GM23248 (cell line): ENCODE measurements at regions of chr3 and their contacts with region 1.

Region 1: DNA sequence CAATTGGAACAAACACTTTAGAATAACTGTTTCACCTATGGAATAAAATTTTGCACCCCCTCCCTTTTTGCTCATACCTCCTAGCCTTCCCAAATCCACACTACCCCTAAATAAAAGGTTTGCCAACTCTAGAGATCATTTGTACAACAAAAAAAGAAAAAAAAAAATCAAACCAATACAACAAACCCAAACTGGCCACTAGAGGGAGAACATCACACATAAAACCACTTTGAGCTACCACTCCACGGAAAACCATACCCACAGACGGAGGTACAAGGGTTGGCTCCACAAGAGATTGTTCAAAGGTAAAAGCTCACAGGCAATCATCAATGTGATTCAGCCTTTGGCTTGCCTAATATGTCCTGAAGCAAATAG is 47.6 kb downstream of the SETMAR start:
- DNase-seq: peak; percentile 79
- H3K4me3 ChIP-seq: peak overlapping the region; percentile 51
- H3K27ac ChIP-seq: peak overlapping the region; percentile 56
- H3K4me1 ChIP-seq: peaks cover 15% of the 10 kb centered on the region
- H3K27me3 ChIP-seq: no peaks in the 10 kb centered on the region

Region 2: DNA sequence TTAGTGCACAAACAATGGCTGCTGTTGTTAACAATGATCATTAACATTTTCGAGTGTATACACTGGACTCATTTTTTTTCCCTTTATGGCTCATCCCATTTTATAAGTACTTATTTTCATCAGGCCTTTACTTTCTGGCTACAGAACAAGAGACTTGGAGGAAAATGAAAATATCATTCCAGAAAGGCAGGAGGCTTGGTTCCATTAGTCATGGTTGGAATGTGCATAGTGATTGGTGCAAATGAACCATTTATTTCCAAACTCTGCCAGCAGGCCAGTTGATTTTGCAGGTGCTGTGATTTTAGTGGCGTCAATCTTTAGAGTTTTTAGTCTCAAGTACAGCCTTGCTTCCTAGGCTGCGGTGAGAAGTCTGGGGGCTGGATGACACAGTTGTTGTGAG is 294.2 kb after region 1 on chr3:
- in situ Hi-C with region 1: loop called (anchors 5 kb)
- DNase-seq: peak; percentile 10
- H3K4me3 ChIP-seq: no peak overlapping the region
- H3K27ac ChIP-seq: no peak overlapping the region
- H3K4me1 ChIP-seq: no peaks in the 10 kb centered on the region
- H3K27me3 ChIP-seq: no peaks in the 10 kb centered on the region